Endothelial cell of umbilical vein (primary cell): ENCODE measurements at regions of chr2 and their contacts with region 1.

Region 1: GRCh38 chr2:55961318-55961911 is 37.8 kb upstream of the EFEMP1 start:
- DNase-seq: peak; percentile 86
- H3K4me3 ChIP-seq: no peak overlapping the region
- H3K27ac ChIP-seq: peak overlapping the region; percentile 86
- H3K4me1 ChIP-seq: peaks cover 38% of the 10 kb centered on the region
- H3K27me3 ChIP-seq: no peaks in the 10 kb centered on the region
- CTCF ChIP-seq: peak; percentile 49 to 56
- POLR2A ChIP-seq: peak; percentile 55

Region 2: GRCh38 chr2:55718165-55719008 is 243.0 kb before region 1 on chr2:
- CTCF ChIA-PET with region 1: interaction called, 3 read pairs
- POLR2A ChIA-PET with region 1: no interaction called
- dilution Hi-C with region 1: no loop called
- intact Hi-C with region 1: loop called (anchors 1 kb)
- DNase-seq: peak; percentile 77
- H3K4me3 ChIP-seq: no peak overlapping the region
- H3K27ac ChIP-seq: no peak overlapping the region
- H3K4me1 ChIP-seq: peaks cover 7% of the 10 kb centered on the region
- H3K27me3 ChIP-seq: no peaks in the 10 kb centered on the region
- CTCF ChIP-seq: peak; percentile 55 to 65
- POLR2A ChIP-seq: no peak

Region 3: DNA sequence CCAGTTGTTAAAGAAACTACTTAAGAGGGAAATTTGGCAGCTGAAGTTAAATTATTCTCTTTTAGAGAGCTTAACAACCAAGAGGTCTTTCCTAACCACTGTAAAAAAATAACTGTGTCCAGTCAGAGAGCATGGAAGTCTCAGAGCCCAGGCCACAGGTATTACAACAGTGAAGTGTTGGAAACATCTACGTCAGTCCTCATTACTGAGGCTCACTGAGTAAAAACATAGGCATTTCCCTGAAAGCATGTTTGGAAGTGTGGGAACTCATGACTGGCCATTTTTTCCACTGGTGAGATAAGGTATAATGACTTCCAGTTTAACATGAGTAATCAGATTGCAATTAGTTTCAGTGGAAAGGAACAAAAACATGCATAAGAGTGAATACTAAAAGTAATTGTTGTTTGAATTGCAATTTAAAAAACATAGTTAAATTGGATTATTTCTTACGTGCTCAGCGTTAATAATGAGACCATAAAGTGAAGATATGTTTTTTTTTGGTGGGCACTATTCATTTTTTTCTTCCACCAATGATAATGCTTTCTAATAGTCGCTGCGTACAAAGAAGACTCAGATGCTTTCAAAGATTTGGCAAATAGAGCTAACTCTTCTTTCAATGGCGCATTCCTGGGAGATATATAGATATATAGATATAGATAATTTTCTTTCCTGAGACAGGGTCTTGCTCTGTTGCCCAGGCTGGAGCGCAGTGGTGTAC is 98.6 kb before region 1 on chr2:
- CTCF ChIA-PET with region 1: no interaction called
- POLR2A ChIA-PET with region 1: interaction called, 3 read pairs
- dilution Hi-C with region 1: no loop called
- intact Hi-C with region 1: loop called (anchors 1 kb)
- DNase-seq: peak; percentile 98
- H3K4me3 ChIP-seq: no peak overlapping the region
- H3K27ac ChIP-seq: peak overlapping the region; percentile 92
- H3K4me1 ChIP-seq: peaks cover 54% of the 10 kb centered on the region
- H3K27me3 ChIP-seq: no peaks in the 10 kb centered on the region
- CTCF ChIP-seq: no peak
- POLR2A ChIP-seq: peak; percentile 80

Region 4: GRCh38 chr2:55916473-55917049 is 44.9 kb before region 1 on chr2:
- CTCF ChIA-PET with region 1: interaction called, 25 read pairs
- POLR2A ChIA-PET with region 1: interaction called, 12 read pairs
- dilution Hi-C with region 1: no loop called
- intact Hi-C with region 1: loop called (anchors 1 kb)
- DNase-seq: peak; percentile 80
- H3K4me3 ChIP-seq: peak overlapping the region in 2 of 3 experiments; percentile 57 to 97
- H3K27ac ChIP-seq: peak overlapping the region; percentile 82
- H3K4me1 ChIP-seq: peaks cover 91% of the 10 kb centered on the region
- H3K27me3 ChIP-seq: no peaks in the 10 kb centered on the region
- CTCF ChIP-seq: no peak
- POLR2A ChIP-seq: no peak

Region 5: GRCh38 chr2:55985406-55985805 is 24.0 kb after region 1 on chr2:
- CTCF ChIA-PET with region 1: interaction called, 38 read pairs
- POLR2A ChIA-PET with region 1: interaction called, 11 read pairs
- dilution Hi-C with region 1: no loop called
- intact Hi-C with region 1: loop called (anchors 1 kb)
- DNase-seq: peak; percentile 77
- H3K4me3 ChIP-seq: peak overlapping the region in 2 of 3 experiments; percentile 4 to 32
- H3K27ac ChIP-seq: peak overlapping the region; percentile 96
- H3K4me1 ChIP-seq: peaks cover 46% of the 10 kb centered on the region
- H3K27me3 ChIP-seq: no peaks in the 10 kb centered on the region
- CTCF ChIP-seq: no peak
- POLR2A ChIP-seq: no peak

Region 6: GRCh38 chr2:56102866-56103265 is 141.5 kb after region 1 on chr2:
- CTCF ChIA-PET with region 1: no interaction called
- POLR2A ChIA-PET with region 1: no interaction called
- dilution Hi-C with region 1: no loop called
- intact Hi-C with region 1: no loop called
- DNase-seq: no peak
- H3K4me3 ChIP-seq: no peak overlapping the region
- H3K27ac ChIP-seq: no peak overlapping the region
- H3K4me1 ChIP-seq: peaks cover 4% of the 10 kb centered on the region
- H3K27me3 ChIP-seq: no peaks in the 10 kb centered on the region
- CTCF ChIP-seq: no peak
- POLR2A ChIP-seq: no peak